ENCODE measurements at regions of chr2 and their contacts with region 1.

Region 1: GRCh38 chr2:25431604-25432003 is 89.9 kb upstream of the DNMT3A start:
- DNase-seq: no peak
- ATAC-seq: no peak
- H3K4me3 Mint-ChIP-seq: no peak overlapping the region
- H3K27ac Mint-ChIP-seq: peak overlapping the region; percentile 51
- H3K4me1 Mint-ChIP-seq: peaks cover 22% of the 10 kb centered on the region
- H3K27me3 Mint-ChIP-seq: no peaks in the 10 kb centered on the region
- CTCF ChIP-seq: no peak

Region 2: DNA sequence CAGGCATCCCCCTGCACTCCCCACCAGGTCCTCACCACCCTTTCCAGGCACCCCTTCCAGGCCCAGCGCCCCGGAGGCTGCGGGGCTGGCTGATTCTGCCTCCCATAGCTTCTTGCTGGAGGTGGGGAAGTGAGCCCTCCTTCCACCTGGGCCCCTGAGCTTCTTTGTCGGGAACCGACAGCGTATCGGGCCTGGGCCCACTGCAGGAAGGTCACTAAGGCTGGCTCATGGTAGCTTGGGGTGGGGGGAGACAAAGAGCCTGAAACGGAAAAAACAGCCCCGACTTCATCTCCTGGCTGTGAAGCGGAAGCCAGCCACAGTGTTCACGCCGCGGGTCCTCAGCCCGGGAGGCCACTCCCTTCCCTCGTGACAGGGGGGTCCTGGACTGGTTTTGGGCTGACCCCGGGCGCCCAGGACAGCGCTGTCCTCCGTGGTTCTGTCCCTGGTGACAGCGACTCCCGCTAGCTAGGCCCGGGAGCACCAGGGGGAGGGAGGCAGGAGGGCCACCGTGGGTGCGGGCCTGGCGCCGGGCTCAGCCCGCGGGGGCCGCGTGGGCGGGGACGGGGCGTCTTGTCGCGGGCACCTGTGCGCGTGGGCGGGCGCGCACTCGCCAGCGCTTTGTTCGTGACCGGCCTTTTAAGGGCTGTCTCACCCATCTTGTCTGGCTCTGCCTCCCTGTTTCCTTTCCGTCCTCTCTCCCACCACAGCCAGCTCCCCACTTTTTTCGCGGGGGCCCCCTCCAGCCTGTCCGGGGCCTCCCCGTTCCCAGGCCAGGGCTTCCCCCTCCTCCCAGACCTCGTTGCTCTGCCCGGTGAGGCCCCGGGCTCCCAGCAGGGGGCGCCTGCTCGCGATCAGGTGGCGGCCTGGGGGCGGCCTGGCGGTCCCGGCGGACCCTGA is 154.8 kb before region 1 on chr2:
- CTCF ChIA-PET with region 1: no interaction called
- POLR2A ChIA-PET with region 1: no interaction called
- intact Hi-C with region 1: no loop called
- DNase-seq: peak; percentile 70
- ATAC-seq: peak; percentile 13
- H3K4me3 Mint-ChIP-seq: peak overlapping the region; percentile 67
- H3K27ac Mint-ChIP-seq: peak overlapping the region; percentile 76
- H3K4me1 Mint-ChIP-seq: peaks cover 88% of the 10 kb centered on the region
- H3K27me3 Mint-ChIP-seq: no peaks in the 10 kb centered on the region
- CTCF ChIP-seq: no peak

Region 3: DNA sequence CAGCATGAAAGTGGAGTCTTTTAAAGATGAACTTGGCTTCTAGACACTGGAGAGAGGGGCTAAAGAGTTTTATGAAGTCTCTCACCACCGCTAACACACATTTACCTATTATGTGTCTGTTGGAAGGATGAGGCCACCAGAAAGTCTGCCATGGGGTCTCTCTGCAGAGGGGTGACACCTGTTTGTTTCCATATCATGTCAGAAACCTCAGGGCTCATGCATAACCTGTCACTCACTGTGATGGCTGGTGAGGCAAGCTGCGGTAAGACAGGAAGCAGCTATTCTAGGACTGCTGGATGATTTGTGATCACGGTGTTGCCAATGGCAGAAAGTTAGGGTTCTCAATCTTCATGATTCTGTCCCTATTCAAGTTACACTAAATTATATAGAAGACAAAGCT is 29.1 kb before region 1 on chr2:
- CTCF ChIA-PET with region 1: no interaction called
- POLR2A ChIA-PET with region 1: no interaction called
- intact Hi-C with region 1: loop called (anchors 5 kb)
- DNase-seq: no peak
- ATAC-seq: peak; percentile 5
- H3K4me3 Mint-ChIP-seq: no peak overlapping the region
- H3K27ac Mint-ChIP-seq: peak overlapping the region; percentile 95
- H3K4me1 Mint-ChIP-seq: peaks cover 88% of the 10 kb centered on the region
- H3K27me3 Mint-ChIP-seq: no peaks in the 10 kb centered on the region
- CTCF ChIP-seq: no peak

Region 4: DNA sequence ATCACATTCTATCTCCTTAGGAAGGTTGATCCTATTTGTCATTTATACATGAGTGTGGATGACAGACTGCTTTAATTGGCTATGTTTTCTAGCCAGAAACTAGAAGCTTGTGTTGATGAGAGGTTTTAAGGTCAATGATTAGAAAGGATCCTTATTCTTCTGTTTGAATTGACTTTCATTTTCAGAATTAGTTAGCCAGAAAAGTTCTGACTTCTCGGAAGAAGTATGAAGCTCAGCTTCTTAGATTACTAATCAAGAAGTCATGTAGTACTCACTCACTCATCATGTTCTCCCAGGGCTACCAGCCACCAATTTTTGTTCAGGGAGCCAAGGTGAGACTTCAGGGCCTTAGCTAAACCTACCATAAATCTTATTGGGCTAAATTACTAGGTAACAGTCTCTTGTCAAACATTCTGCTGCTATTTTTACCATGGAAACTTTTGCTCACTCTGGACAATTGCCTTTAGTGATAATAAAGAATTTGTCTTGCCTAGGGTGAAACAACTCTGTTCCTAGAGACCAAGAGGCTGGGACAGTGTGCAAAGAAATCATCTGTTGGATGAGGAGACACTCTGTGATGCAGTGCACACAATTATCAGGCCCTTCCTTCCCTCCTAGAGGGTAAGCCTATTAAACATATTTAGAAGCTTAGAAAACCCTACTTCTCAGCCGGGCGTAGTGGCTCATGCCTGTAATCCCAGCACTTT is 21.7 kb after region 1 on chr2:
- CTCF ChIA-PET with region 1: no interaction called
- POLR2A ChIA-PET with region 1: no interaction called
- intact Hi-C with region 1: loop called (anchors 2 kb)
- DNase-seq: no peak
- ATAC-seq: peak; percentile 85
- H3K4me3 Mint-ChIP-seq: peak overlapping the region; percentile 44
- H3K27ac Mint-ChIP-seq: peak overlapping the region; percentile 82
- H3K4me1 Mint-ChIP-seq: peaks cover 39% of the 10 kb centered on the region
- H3K27me3 Mint-ChIP-seq: no peaks in the 10 kb centered on the region
- CTCF ChIP-seq: no peak